ENCODE measurements at regions of chr14 and their contacts with region 1.

Region 1: GRCh38 chr14:101781240-101782061 is 19.9 kb downstream of the PPP2R5C start:
- DNase-seq: peak in 1 of 2 donors; percentile 32
- ATAC-seq: peak; percentile 62 to 80 (median 70)
- H3K4me3 ChIP-seq: peak overlapping the region; percentile 34 to 74 (median 58)
- H3K27ac ChIP-seq: peak overlapping the region in 9 of 10 donors; percentile 5 to 68 (median 55)
- H3K4me1 ChIP-seq: peaks cover 0 to 36% (median 15%) of the 10 kb centered on the region in 9 donors
- H3K27me3 ChIP-seq: peaks cover 0 to 28% (median 0%) of the 10 kb centered on the region in 7 donors
- CTCF ChIP-seq: peak in 2 of 9 donors; percentile 15 to 23

Region 2: DNA sequence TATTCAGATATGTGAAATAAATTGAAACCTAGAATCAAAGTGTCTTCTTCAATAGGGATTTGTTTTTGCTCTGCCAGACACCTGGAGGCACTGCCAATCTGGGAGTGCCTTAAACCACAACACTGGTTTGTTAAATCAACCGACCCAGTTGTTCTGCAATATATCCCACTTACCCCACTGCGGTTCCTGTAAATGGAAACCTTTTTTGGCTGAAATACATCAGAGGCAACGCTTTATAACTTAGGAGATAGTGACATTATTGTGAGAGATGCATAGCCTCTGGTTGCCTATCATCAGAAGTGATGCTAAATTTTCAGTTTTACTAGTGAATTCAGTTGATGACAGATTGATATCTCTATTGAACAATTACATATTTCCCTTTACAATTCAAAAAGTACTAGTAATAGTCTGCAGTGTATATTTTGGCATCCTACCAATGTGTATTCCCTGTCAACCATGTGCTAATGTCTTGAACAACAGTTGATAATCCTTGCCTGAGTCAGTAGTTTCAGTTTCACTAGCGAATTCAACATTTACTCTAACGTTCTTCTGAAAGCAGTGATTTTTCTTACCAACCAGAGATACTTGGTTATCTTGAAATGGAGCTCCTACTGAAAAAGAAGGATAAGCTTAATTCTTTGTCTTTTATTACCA is 10.6 kb after region 1 on chr14:
- intact Hi-C with region 1: loop called in 1 of 10 experiments (anchors 2 kb)
- DNase-seq: no peak
- ATAC-seq: peak in 4 of 8 donors; percentile 43 to 60 (median 52)
- H3K4me3 ChIP-seq: peak overlapping the region in 9 of 10 donors; percentile 3 to 43 (median 31)
- H3K27ac ChIP-seq: peak overlapping the region in 9 of 10 donors; percentile 26 to 71 (median 60)
- H3K4me1 ChIP-seq: peaks cover 3 to 31% (median 11%) of the 10 kb centered on the region in 9 donors
- H3K27me3 ChIP-seq: no peaks in the 10 kb centered on the region
- CTCF ChIP-seq: no peak

Region 3: GRCh38 chr14:102215071-102215470 is 433.6 kb after region 1 on chr14:
- intact Hi-C with region 1: no loop called
- DNase-seq: no peak
- ATAC-seq: peak in 7 of 8 donors; percentile 56 to 82 (median 72)
- H3K4me3 ChIP-seq: peak overlapping the region in 2 of 10 donors; percentile 9 to 10
- H3K27ac ChIP-seq: peak overlapping the region in 9 of 10 donors; percentile 41 to 80 (median 60)
- H3K4me1 ChIP-seq: peaks cover 0 to 46% (median 28%) of the 10 kb centered on the region in 9 donors
- H3K27me3 ChIP-seq: no peaks in the 10 kb centered on the region
- CTCF ChIP-seq: no peak